Posterior vena cava (tissue), 2 donors: ENCODE measurements at regions of chr10 and their contacts with region 1.

Region 1: DNA sequence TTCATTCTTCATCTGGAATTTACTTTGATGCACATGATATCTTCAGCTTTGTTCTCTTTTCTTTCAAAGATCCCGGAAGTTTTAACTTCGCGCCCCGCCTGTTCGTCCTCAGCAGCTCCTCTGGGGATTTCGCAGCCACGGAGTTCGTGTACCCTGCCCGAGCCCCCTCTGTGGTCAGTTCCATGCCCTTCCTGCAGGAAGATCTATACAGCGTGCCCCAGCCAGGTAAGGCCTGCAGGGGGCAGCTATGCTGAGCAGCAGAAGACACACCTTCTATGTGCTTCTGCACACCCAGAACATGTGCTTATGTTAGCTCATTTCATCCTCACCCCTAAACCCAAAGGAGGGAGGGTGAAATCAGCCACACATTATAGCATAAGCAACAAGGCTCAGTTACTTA is 79.7 kb upstream of the LYZL2 start:
- DNase-seq: no peak

Region 2: DNA sequence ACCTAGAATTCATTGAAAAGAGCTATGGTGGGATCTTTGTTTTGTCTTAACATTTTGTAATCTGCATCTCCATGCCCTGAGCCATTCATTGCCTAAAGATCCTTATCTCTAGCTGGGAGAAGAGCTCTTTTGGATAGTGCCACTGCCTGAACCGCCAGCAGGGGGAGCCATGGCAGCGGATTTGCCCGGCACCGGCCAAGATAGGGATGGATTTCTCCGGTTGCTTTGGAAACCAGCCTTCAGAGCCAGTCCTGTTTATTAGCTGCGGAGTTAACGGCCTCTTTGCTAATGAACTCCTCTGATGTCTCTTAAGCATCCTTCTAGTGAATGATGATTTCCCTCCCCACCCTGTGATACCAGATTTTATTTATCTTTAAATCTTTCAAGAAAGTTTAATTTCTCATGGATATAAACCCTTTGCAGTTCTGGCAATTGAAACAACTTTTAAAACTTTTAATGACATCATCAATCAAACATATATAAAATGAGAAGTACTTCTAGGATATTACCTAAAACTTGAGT is 21.5 kb before region 1 on chr10:
- intact Hi-C with region 1: no loop called
- DNase-seq: peak; percentile 94

Region 3: DNA sequence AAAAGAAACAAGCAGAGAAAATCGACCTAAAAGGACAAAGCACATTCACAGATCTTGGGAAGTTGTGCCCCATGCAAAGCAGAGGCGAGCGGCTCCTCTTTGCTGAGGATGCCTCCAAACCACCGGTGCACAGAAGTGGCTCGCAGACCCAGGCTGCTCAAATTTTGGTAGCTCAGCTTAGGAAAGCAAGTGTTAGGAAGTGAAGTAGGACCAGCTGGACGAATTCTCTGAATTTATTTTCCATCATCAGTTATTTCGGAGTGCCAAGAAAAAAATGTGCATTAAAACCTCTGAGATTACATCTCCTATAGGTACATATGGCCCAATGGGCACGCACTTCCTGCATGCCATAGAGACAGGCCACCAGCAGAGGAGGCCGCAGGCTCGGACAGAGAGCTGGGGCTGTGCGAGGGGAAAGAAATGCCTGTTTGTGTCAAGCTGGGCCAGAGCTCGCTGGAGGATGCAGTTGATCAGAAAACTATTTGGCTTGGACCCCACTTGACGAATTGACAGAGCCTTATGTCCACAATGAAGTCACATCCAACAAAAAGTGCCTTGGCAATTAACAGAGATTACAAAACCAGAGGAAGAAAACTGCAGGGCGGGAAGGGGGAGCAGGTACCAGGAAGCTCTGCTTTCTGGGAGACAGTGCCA is 42.6 kb after region 1 on chr10:
- intact Hi-C with region 1: no loop called
- DNase-seq: peak; percentile 93

Region 4: GRCh38 chr10:30915146-30915545 is 205.9 kb after region 1 on chr10:
- intact Hi-C with region 1: loop called in 1 of 2 experiments (anchors 2 kb)
- DNase-seq: no peak